ENCODE measurements at regions of chr18 and their contacts with region 1.

Region 1: GRCh38 chr18:63439334-63439733 is 17.1 kb upstream of the VPS4B start:
- DNase-seq: peak; percentile 54
- H3K4me3 Mint-ChIP-seq: no peak overlapping the region
- H3K27ac Mint-ChIP-seq: no peak overlapping the region
- H3K4me1 Mint-ChIP-seq: no peaks in the 10 kb centered on the region
- H3K27me3 Mint-ChIP-seq: peaks cover 7% of the 10 kb centered on the region

Region 2: DNA sequence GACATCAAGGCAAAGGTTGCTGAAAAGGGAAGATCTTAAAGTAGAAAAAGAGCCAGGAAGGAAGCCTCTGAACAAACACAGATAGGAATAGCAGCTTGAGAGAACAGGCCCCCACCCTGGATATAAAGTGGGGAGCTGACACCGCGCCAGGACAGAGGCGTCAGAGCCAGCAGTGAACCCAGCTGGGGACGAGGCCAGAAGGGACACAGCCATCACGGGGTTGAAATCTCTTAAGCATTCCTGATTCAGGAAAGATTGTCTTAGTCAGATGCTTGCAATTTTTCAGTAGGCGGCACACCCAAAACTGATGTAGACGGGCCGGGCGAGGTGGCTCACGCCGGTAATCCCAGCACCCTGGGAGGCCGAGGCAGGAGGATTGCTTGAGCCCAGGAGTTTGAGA is 817.8 kb before region 1 on chr18:
- CTCF ChIA-PET with region 1: no interaction called
- POLR2A ChIA-PET with region 1: no interaction called
- intact Hi-C with region 1: no loop called
- DNase-seq: no peak
- H3K4me3 Mint-ChIP-seq: no peak overlapping the region
- H3K27ac Mint-ChIP-seq: no peak overlapping the region
- H3K4me1 Mint-ChIP-seq: no peaks in the 10 kb centered on the region
- H3K27me3 Mint-ChIP-seq: peaks cover 14% of the 10 kb centered on the region

Region 3: GRCh38 chr18:63004466-63005089 is 434.8 kb before region 1 on chr18:
- CTCF ChIA-PET with region 1: interaction called, 11 read pairs
- POLR2A ChIA-PET with region 1: no interaction called
- intact Hi-C with region 1: no loop called
- DNase-seq: no peak
- H3K4me3 Mint-ChIP-seq: no peak overlapping the region
- H3K27ac Mint-ChIP-seq: no peak overlapping the region
- H3K4me1 Mint-ChIP-seq: no peaks in the 10 kb centered on the region
- H3K27me3 Mint-ChIP-seq: peaks cover under 1% of the 10 kb centered on the region

Region 4: GRCh38 chr18:63025251-63026090 is 413.9 kb before region 1 on chr18:
- CTCF ChIA-PET with region 1: interaction called, 21 read pairs
- POLR2A ChIA-PET with region 1: no interaction called
- intact Hi-C with region 1: no loop called
- DNase-seq: peak; percentile 31
- H3K4me3 Mint-ChIP-seq: no peak overlapping the region
- H3K27ac Mint-ChIP-seq: no peak overlapping the region
- H3K4me1 Mint-ChIP-seq: no peaks in the 10 kb centered on the region
- H3K27me3 Mint-ChIP-seq: peaks cover 2% of the 10 kb centered on the region

Region 5: DNA sequence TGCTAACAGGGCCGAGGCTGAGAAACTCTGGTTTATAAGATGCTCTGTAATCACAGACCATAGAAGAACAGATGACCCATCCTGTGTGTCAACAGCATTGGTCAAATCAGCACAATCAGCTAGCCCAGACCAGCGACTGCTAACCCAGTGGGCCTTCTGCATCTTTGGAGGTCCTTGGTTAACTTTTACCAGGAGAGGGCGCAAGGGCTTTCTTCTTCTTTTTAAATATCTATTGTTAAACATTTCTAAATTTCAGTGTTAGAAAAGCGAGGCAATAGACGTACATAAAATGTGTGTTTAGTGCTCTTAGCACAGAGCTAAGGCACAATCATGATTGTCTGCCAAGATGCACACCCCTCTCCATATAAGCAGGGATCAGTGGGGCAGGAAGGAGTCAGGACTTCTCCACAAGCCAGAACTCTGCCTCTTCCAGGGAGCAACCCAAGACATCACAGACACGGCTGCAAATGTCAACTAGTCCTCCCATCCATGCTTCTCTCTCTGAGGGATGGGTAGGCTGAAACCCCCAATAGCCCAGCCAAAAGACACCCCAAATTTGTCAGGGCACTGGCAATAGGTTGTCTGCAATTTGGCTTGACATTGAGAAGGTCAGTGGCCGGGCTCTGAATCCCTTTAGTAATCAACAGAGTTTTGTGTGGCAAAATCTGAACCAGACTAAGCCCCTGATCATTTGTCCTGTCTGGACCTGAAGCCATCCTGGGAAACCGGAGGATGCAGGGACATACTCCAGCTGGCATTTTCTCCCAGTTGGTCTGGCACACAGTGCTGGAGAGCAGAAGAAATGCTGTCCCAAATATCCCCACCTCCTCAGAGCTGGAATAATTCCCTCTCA is 308.0 kb before region 1 on chr18:
- CTCF ChIA-PET with region 1: interaction called, 9 read pairs
- POLR2A ChIA-PET with region 1: no interaction called
- intact Hi-C with region 1: loop called (anchors 5 kb)
- DNase-seq: peak; percentile 64
- H3K4me3 Mint-ChIP-seq: no peak overlapping the region
- H3K27ac Mint-ChIP-seq: peak overlapping the region; percentile 65
- H3K4me1 Mint-ChIP-seq: peaks cover 30% of the 10 kb centered on the region
- H3K27me3 Mint-ChIP-seq: no peaks in the 10 kb centered on the region

Region 6: DNA sequence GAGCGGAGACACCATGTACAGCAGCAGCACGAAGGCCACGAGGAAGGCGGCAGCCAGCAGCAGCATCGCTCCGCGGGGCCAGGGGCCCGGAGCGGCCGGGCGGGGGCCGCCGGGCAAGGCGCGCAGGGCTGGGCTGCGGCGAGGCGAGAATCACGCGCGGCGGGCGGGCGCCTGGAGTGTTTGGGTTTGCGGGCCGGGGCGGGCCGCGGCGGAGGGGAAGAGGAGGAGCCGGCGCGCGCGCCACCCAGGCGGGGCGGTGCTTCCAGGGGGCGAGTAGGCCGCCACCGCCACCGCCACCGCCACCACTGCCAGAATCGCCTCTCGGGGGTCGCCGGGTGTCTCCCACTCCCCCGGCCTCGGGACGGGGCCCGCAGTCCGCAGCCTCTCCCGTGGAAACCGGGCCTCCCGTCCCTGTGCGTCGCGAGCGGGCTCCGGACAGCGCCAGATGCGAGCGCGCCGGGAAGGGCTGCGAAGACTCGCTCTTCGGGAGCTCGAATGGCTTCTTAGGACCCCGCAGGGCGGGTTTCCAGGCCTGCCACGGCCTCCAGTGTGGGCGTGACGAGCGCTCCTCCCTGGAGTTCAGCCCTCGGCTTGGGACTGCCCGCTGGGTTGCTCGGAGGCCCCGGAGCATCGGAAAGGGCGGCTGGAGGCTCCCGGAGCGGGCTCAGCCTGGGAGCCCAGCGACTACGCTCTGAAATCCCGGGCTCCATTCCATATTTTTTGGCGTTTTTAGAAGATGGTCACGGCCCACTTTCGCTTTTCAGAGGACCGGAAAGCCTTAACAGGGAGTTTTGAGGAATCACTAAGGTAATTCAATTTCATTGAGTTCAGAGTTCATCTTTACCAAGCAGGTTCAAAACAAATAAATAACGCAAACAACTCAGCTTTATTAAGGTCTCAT is 72.0 kb before region 1 on chr18 and contains the start of gene KDSR:
- CTCF ChIA-PET with region 1: interaction called, 23 read pairs
- POLR2A ChIA-PET with region 1: interaction called, 3 read pairs
- intact Hi-C with region 1: no loop called
- DNase-seq: peak; percentile 89
- H3K4me3 Mint-ChIP-seq: peak within 1 kb of the TSS; percentile 90
- H3K27ac Mint-ChIP-seq: peak within 1 kb of the TSS; percentile 86
- H3K4me1 Mint-ChIP-seq: peaks cover 29% of the 10 kb centered on the region
- H3K27me3 Mint-ChIP-seq: no peaks in the 10 kb centered on the region
- total RNA-seq, gene KDSR: 72.8 to 77.2 TPM